Heart right ventricle (tissue), 16 donors: ENCODE measurements at regions of chr2 and their contacts with region 1.

Region 1: DNA sequence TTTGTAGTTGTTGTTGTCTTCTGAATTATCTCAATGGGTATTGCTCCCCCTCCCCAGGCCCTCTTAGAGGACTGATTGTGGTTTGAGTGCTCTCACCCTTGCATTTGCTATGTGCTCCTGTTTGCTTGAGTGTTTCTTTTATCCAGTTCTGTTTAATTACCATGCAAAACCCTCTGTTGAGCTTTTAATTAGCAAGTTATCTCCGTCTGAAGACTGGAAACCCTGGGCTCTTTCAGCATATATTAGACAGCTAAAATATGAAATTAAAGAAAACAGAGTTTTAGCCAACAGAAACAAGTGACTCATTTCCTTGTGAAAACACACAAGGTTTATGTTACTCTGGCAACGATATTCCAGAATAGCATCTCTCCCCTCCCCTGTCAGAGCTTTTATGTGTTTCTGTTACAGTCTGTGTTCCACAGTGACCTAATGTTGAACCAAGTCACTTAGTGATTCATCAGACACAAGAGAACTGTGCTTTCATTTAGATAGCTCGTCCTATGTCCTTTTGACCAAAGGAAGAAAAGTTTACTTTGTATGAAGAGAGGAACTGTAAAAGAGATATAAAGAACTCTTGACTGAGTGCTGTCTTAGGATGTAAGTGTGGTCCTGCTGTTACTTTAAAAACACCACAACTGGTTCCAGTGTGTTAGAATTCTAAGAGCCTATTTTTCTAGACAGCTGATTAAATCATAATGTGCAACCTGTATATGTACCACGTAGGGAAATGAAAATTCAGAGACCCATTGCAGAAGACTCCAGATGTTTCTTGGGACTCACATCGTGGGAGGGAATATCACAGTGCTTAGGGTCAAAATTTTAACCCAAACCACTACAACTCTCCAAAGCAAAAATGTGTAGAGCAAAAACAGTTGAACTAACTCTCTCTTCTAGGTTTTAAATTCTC is 172.8 kb upstream of the RBMS1 start:
- DNase-seq: peak in 1 of 2 donors; percentile 42
- ATAC-seq: peak; percentile 93 to 100 (median 96)
- H3K4me3 ChIP-seq: peak overlapping the region in 3 of 10 donors; percentile 6 to 29 (median 19)
- H3K27ac ChIP-seq: peak overlapping the region; percentile 18 to 75 (median 64)
- H3K4me1 ChIP-seq: peaks cover 5 to 35% (median 18%) of the 10 kb centered on the region in 9 donors
- H3K27me3 ChIP-seq: no peaks in the 10 kb centered on the region
- CTCF ChIP-seq: no peak

Region 2: DNA sequence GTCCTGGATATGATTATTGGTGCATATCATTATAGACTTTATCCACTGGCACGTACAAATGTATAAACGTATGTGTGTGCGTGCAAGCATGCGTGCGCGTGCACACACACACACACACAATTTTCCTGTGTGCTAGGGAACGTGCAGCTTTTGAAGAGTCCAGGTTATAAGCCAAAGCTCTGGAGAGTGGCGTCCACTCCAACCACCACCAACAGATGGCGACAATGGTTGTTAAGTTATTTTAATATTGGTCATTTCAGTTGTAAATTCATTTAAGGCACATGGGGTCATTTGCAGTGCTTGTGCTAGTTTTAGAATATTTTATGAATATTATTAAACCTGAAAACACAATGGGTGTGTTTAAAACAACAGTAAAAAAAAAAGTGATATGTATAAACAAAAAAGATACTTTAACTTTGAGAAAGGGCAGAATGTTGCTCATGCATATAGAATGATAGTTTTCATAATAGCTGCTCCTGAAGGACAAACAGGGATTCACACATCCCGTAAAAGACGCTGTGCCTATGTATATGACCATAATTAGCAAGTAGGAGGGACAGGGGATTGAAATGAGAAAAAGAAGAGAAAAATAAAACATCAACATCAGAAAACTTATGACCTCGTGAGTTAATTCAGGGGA is 342.1 kb before region 1 on chr2:
- intact Hi-C with region 1: loop called in 1 of 10 experiments (anchors 10 kb)
- DNase-seq: peak; percentile 51 to 67
- ATAC-seq: peak in 7 of 8 donors; percentile 31 to 62 (median 40)
- H3K4me3 ChIP-seq: no peak overlapping the region
- H3K27ac ChIP-seq: peak overlapping the region in 3 of 10 donors; percentile 9 to 82 (median 36)
- H3K4me1 ChIP-seq: peaks cover 0 to 97% (median 77%) of the 10 kb centered on the region in 9 donors
- H3K27me3 ChIP-seq: no peaks in the 10 kb centered on the region
- CTCF ChIP-seq: peak; percentile 47 to 85 (median 73)

Region 3: DNA sequence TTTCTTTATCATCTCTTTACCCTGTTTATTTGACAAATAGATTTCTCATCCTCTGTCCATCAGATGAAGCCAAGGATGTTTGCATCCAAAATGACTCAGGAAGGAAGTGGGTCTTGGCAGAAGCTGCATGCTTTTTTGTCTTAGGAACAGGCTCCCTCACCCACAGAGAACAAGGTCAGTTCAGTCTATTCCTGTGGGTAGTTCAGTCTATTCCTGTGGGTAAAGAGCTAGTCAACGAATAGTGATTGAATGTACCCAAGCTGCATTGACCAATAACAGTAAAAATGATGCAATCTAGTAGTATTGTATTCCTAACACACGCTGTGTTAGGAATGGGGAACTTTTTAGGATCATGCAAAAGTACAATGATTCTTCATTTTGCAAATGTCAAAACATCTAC is 203.0 kb after region 1 on chr2:
- intact Hi-C with region 1: loop called in 1 of 10 experiments (anchors 5 kb)
- DNase-seq: no peak
- ATAC-seq: peak in 7 of 8 donors; percentile 48 to 88 (median 66)
- H3K4me3 ChIP-seq: no peak overlapping the region
- H3K27ac ChIP-seq: peak overlapping the region in 9 of 10 donors; percentile 16 to 73 (median 65)
- H3K4me1 ChIP-seq: peaks cover 0 to 23% (median 12%) of the 10 kb centered on the region in 9 donors
- H3K27me3 ChIP-seq: no peaks in the 10 kb centered on the region
- CTCF ChIP-seq: no peak

Region 4: DNA sequence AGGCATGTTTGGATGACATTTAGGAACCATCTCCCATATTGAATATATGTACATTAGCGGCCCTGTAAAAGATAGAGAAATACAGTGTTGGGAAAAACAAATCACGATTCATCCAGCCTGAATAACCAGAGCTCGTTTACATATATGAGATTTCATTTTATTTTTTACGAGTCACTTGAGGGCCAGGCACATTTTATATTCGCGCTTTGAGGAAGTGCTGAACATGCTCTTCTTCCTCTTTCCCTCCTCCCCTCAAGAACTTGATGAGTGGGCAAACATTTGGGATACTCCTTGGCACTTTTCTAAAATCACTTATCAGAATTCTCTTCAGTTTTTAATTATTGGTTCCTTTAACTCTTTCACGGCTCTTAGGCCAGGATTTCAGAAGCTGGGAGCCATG is 225.8 kb after region 1 on chr2:
- intact Hi-C with region 1: no loop called
- DNase-seq: no peak
- ATAC-seq: no peak
- H3K4me3 ChIP-seq: no peak overlapping the region
- H3K27ac ChIP-seq: no peak overlapping the region
- H3K4me1 ChIP-seq: peaks cover 0 to 7% (median 4%) of the 10 kb centered on the region in 9 donors
- H3K27me3 ChIP-seq: no peaks in the 10 kb centered on the region
- CTCF ChIP-seq: no peak